ENCODE measurements at regions of chr9 and their contacts with region 1.

Region 1: GRCh38 chr9:90559075-90560073 is 83.2 kb downstream of the DIRAS2 start:
- DNase-seq: no peak
- ATAC-seq: no peak
- H3K4me3 ChIP-seq: no peak overlapping the region
- H3K4me3 Mint-ChIP-seq: no peak overlapping the region
- H3K27ac ChIP-seq: no peak overlapping the region
- H3K27ac Mint-ChIP-seq: no peak overlapping the region
- H3K4me1 ChIP-seq: no peaks in the 10 kb centered on the region
- H3K4me1 Mint-ChIP-seq: no peaks in the 10 kb centered on the region
- H3K27me3 ChIP-seq: no peaks in the 10 kb centered on the region
- H3K27me3 Mint-ChIP-seq: peaks cover 0 to 8% of the 10 kb centered on the region in 2 donors

Region 2: GRCh38 chr9:90546229-90546641 is 13.1 kb before region 1 on chr9:
- CTCF ChIA-PET with region 1: no interaction called
- POLR2A ChIA-PET with region 1: interaction called in 1 of 2 experiments, 16 read pairs
- DNase-seq: no peak
- ATAC-seq: no peak
- H3K4me3 ChIP-seq: no peak overlapping the region
- H3K4me3 Mint-ChIP-seq: no peak overlapping the region
- H3K27ac ChIP-seq: no peak overlapping the region
- H3K27ac Mint-ChIP-seq: no peak overlapping the region
- H3K4me1 ChIP-seq: no peaks in the 10 kb centered on the region
- H3K4me1 Mint-ChIP-seq: no peaks in the 10 kb centered on the region
- H3K27me3 ChIP-seq: no peaks in the 10 kb centered on the region
- H3K27me3 Mint-ChIP-seq: peaks cover 1 to 8% of the 10 kb centered on the region in 2 donors

Region 3: GRCh38 chr9:90616806-90617205 is 57.4 kb after region 1 on chr9:
- CTCF ChIA-PET with region 1: no interaction called
- POLR2A ChIA-PET with region 1: no interaction called
- DNase-seq: no peak
- ATAC-seq: no peak
- H3K4me3 ChIP-seq: no peak overlapping the region
- H3K4me3 Mint-ChIP-seq: no peak overlapping the region
- H3K27ac ChIP-seq: no peak overlapping the region
- H3K27ac Mint-ChIP-seq: no peak overlapping the region
- H3K4me1 ChIP-seq: no peaks in the 10 kb centered on the region
- H3K4me1 Mint-ChIP-seq: no peaks in the 10 kb centered on the region
- H3K27me3 ChIP-seq: peaks cover 0 to under 1% of the 10 kb centered on the region in 2 experiments
- H3K27me3 Mint-ChIP-seq: peaks cover 9 to 31% of the 10 kb centered on the region in 2 donors